AG04450 (cell line): ENCODE measurements at regions of chr20 and their contacts with region 1.

Region 1: GRCh38 chr20:330233-331149 is 5.1 kb downstream of the SOX12 start:
- DNase-seq: no peak
- H3K4me3 ChIP-seq: no peak overlapping the region
- H3K27ac ChIP-seq: no peak overlapping the region
- H3K27me3 ChIP-seq: no peaks in the 10 kb centered on the region
- CTCF ChIP-seq: peak; percentile 92

Region 2: GRCh38 chr20:208942-209566 is 121.4 kb before region 1 on chr20:
- CTCF ChIA-PET with region 1: interaction called, 17 read pairs
- POLR2A ChIA-PET with region 1: no interaction called
- DNase-seq: peak; percentile 45
- H3K4me3 ChIP-seq: no peak overlapping the region
- H3K27ac ChIP-seq: no peak overlapping the region
- H3K27me3 ChIP-seq: no peaks in the 10 kb centered on the region
- CTCF ChIP-seq: peak; percentile 70

Region 3: GRCh38 chr20:266596-267562 is 63.6 kb before region 1 on chr20:
- CTCF ChIA-PET with region 1: interaction called, 17 read pairs
- POLR2A ChIA-PET with region 1: no interaction called
- DNase-seq: peak; percentile 33
- H3K4me3 ChIP-seq: peak overlapping the region; percentile 70
- H3K27ac ChIP-seq: no peak overlapping the region
- H3K27me3 ChIP-seq: peaks cover 13% of the 10 kb centered on the region
- CTCF ChIP-seq: peak; percentile 93

Region 4: GRCh38 chr20:341682-342081 is 11.2 kb after region 1 on chr20:
- CTCF ChIA-PET with region 1: interaction called, 44 read pairs
- POLR2A ChIA-PET with region 1: interaction called, 9 read pairs
- DNase-seq: no peak
- H3K4me3 ChIP-seq: no peak overlapping the region
- H3K27ac ChIP-seq: no peak overlapping the region
- H3K27me3 ChIP-seq: peaks cover 4% of the 10 kb centered on the region
- CTCF ChIP-seq: no peak

Region 5: GRCh38 chr20:347640-348484 is 17.4 kb after region 1 on chr20:
- CTCF ChIA-PET with region 1: interaction called, 44 read pairs
- POLR2A ChIA-PET with region 1: interaction called, 9 read pairs
- DNase-seq: peak; percentile 80
- H3K4me3 ChIP-seq: peak overlapping the region; percentile 87
- H3K27ac ChIP-seq: peak overlapping the region; percentile 92
- H3K27me3 ChIP-seq: no peaks in the 10 kb centered on the region
- CTCF ChIP-seq: no peak